Posterior cingulate gyrus (tissue), 11 donors: ENCODE measurements at regions of chr14 and their contacts with region 1.

Region 1: GRCh38 chr14:67426983-67427606 is 15.1 kb upstream of the PLEK2 start:
- DNase-seq: peak; percentile 57 to 95 (median 77)

Region 2: DNA sequence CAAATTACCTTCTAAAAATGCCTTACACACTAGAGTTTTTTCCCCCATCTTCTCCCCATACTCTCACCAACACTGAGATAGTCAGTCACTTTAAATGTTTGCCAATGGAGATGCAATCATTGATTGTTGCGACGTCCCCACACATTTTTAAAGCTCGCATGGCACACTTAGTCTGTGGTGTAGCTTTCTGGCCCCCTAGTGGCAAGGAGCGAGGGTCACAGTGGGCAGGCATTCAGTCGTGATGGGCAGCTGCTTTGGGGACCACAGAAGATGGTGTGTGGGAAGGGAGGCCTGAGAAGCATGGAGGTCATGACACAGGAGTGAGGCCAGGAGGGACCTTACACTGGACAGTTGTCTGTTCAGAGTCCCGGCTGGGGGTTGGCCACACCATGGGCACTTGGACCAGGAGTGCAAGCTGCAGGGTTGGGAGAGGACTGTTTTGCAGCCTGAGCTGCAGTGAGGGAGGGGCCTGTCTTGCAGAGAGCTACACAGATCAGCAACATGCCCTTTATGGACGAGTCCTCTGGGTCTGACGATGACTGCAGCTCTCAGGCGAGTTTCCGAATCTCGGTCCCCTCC is 144.3 kb after region 1 on chr14:
- intact Hi-C with region 1: loop called (anchors 1 kb)
- DNase-seq: peak in 9 of 10 donors; percentile 52 to 95 (median 76)

Region 3: DNA sequence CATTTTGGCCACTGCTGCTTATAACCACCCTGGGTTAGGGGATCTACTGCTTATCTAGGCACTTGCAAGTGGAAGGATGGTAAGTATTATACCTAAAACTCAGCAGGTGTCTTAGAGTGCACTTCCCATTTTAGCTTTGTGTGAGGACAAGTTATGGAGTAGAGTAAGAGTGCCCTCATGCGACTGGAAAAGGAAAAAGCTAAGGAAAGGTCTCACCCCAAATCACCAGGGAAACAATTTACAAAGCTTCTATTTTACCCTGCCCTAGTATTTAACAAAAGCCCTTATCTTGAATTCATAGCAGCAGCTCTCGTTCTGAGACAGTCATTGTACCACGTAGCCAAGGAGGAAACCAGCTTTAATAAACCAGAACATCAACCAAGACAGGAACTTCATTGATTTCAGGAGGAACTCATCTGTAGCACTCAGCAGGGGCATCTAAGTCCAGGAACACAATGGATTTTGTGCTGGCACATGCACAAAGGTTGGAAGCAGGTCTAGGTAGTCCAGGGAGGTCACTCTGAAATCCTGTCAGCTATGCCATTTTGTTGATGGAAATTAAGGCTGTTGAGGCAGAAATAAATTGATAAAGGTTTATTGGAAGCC is 277.5 kb after region 1 on chr14:
- intact Hi-C with region 1: loop called (anchors 1 kb)
- DNase-seq: peak in 1 of 10 donors; percentile 20